ENCODE measurements at regions of chr10 and their contacts with region 1.

Region 1: DNA sequence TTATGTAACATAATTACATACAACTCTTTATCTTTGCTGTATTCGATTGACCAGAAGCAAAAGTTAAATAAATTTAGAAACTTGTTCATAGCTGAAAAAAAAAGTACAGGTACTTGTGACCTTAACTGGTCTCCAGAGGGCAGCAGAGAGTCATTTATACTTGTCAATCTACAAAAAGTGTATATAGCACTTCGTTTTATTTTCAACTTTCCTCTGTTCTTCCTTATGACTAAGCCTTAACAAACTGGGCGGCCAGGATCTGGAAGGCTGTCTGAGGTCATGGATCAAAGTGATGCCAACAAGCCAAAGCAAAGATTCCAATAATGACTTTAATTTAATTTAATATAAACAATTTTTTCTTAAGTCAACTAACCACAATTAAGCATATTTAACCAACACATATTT is 29.8 kb downstream of the C10orf67 start:
- DNase-seq: peak in 7 of 9 donors; percentile 44 to 73 (median 70)
- ATAC-seq: peak; percentile 73
- H3K4me3 ChIP-seq: no peak overlapping the region
- H3K4me3 Mint-ChIP-seq: no peak overlapping the region
- H3K27ac ChIP-seq: no peak overlapping the region
- H3K27ac Mint-ChIP-seq: no peak overlapping the region
- H3K4me1 ChIP-seq: no peaks in the 10 kb centered on the region
- H3K4me1 Mint-ChIP-seq: peaks cover 0 to 5% (median 0%) of the 10 kb centered on the region in 7 donors
- H3K27me3 ChIP-seq: no peaks in the 10 kb centered on the region
- H3K27me3 Mint-ChIP-seq: peaks cover 0 to 6% (median 0%) of the 10 kb centered on the region in 5 donors

Region 2: DNA sequence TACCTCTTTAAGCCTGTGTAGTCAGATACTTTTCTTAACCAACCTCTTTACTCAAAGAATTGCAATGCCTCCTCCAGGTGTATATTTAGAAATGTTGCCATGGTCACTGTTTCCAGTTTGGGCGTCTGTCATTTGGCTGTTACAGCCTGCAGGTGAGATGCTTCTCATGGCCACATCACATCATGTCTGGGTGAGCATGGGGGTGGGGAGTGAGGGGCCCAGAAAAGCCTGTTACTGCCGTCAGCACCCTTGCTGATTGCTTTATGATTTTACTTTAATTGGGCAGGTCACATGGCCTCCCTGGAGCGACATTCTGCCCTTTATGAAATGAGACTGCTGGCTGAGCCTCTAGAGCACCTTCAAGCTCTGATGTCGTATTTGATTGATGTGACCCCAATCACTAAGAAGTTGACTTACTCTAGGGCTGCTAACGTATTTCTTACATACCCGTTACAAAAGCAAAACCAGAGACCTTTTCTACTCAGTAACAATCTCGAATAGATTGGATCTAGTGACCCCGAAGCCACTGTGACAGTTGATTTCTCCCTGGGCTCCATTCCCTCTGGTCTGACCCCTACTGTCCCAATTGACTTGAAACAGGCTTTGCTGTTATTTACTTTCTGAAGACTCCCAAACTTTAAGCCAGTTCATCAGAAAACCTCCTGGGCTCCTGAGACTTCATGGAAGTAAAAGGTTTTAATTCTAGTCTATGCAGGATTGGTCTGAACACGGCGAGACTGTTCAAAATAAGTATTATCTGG is 184.7 kb after region 1 on chr10:
- CTCF ChIA-PET with region 1: no interaction called
- POLR2A ChIA-PET with region 1: no interaction called
- intact Hi-C with region 1: loop called in 1 of 2 experiments (anchors 1 kb)
- DNase-seq: no peak
- ATAC-seq: no peak
- H3K4me3 ChIP-seq: no peak overlapping the region
- H3K4me3 Mint-ChIP-seq: no peak overlapping the region
- H3K27ac ChIP-seq: no peak overlapping the region
- H3K27ac Mint-ChIP-seq: peak overlapping the region in 1 of 9 donors; percentile 4
- H3K4me1 ChIP-seq: no peaks in the 10 kb centered on the region
- H3K4me1 Mint-ChIP-seq: no peaks in the 10 kb centered on the region
- H3K27me3 ChIP-seq: no peaks in the 10 kb centered on the region
- H3K27me3 Mint-ChIP-seq: peaks cover 0 to 9% (median 0%) of the 10 kb centered on the region in 5 donors

Region 3: GRCh38 chr10:23516530-23516929 is 201.7 kb after region 1 on chr10:
- CTCF ChIA-PET with region 1: interaction called, 5 read pairs
- POLR2A ChIA-PET with region 1: no interaction called
- intact Hi-C with region 1: loop called in 1 of 2 experiments (anchors 1 kb)
- DNase-seq: peak in 5 of 9 donors; percentile 17 to 50 (median 40)
- ATAC-seq: no peak
- H3K4me3 ChIP-seq: no peak overlapping the region
- H3K4me3 Mint-ChIP-seq: no peak overlapping the region
- H3K27ac ChIP-seq: no peak overlapping the region
- H3K27ac Mint-ChIP-seq: no peak overlapping the region
- H3K4me1 ChIP-seq: no peaks in the 10 kb centered on the region
- H3K4me1 Mint-ChIP-seq: peaks cover 0 to 17% (median 0%) of the 10 kb centered on the region in 7 donors
- H3K27me3 ChIP-seq: no peaks in the 10 kb centered on the region
- H3K27me3 Mint-ChIP-seq: peaks cover 9 to 23% (median 18%) of the 10 kb centered on the region in 5 donors

Region 4: DNA sequence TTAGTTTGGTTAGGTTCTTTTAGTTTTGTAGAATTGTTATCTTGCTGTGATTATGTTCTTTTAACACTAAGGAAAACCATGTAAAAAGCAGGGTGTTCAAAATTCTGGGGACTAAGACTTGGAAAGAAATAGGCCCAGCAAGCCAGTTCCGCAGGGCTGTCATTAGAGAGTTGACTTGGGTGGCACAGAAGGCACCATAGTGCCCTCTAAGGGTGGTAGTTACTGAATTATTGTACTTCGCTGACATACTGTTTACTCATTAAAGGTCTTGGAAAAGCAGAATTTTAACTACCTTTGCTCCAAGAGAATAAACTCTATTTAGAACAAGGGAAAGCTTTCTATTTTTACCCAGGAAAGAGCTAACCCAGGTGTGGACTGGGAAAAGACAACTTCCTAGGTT is 210.6 kb after region 1 on chr10:
- CTCF ChIA-PET with region 1: interaction called, 18 read pairs
- POLR2A ChIA-PET with region 1: no interaction called
- intact Hi-C with region 1: loop called (anchors 1 kb)
- DNase-seq: peak in 1 of 9 donors; percentile 15
- ATAC-seq: peak; percentile 50
- H3K4me3 ChIP-seq: no peak overlapping the region
- H3K4me3 Mint-ChIP-seq: no peak overlapping the region
- H3K27ac ChIP-seq: no peak overlapping the region
- H3K27ac Mint-ChIP-seq: peak overlapping the region in 1 of 9 donors; percentile 72
- H3K4me1 ChIP-seq: no peaks in the 10 kb centered on the region
- H3K4me1 Mint-ChIP-seq: peaks cover 0 to 5% (median 0%) of the 10 kb centered on the region in 7 donors
- H3K27me3 ChIP-seq: no peaks in the 10 kb centered on the region
- H3K27me3 Mint-ChIP-seq: peaks cover 0 to 7% (median 6%) of the 10 kb centered on the region in 5 donors

Region 5: GRCh38 chr10:23656735-23657134 is 341.9 kb after region 1 on chr10:
- CTCF ChIA-PET with region 1: interaction called, 3 read pairs
- POLR2A ChIA-PET with region 1: no interaction called
- intact Hi-C with region 1: loop called in 1 of 2 experiments (anchors 1 kb)
- DNase-seq: peak in 5 of 9 donors; percentile 4 to 40 (median 37)
- ATAC-seq: no peak
- H3K4me3 ChIP-seq: no peak overlapping the region
- H3K4me3 Mint-ChIP-seq: no peak overlapping the region
- H3K27ac ChIP-seq: no peak overlapping the region
- H3K27ac Mint-ChIP-seq: peak overlapping the region in 1 of 9 donors; percentile 16
- H3K4me1 ChIP-seq: no peaks in the 10 kb centered on the region
- H3K4me1 Mint-ChIP-seq: peaks cover 0 to 2% (median 0%) of the 10 kb centered on the region in 7 donors
- H3K27me3 ChIP-seq: no peaks in the 10 kb centered on the region
- H3K27me3 Mint-ChIP-seq: peaks cover 0 to 14% (median 9%) of the 10 kb centered on the region in 5 donors

Region 6: GRCh38 chr10:23702977-23703414 is 388.2 kb after region 1 on chr10:
- CTCF ChIA-PET with region 1: interaction called, 3 read pairs
- POLR2A ChIA-PET with region 1: no interaction called
- intact Hi-C with region 1: loop called (anchors 1 kb)
- DNase-seq: peak in 7 of 9 donors; percentile 39 to 68 (median 61)
- ATAC-seq: peak; percentile 78
- H3K4me3 ChIP-seq: no peak overlapping the region
- H3K4me3 Mint-ChIP-seq: peak overlapping the region in 8 of 10 donors; percentile 7 to 62 (median 50)
- H3K27ac ChIP-seq: no peak overlapping the region
- H3K27ac Mint-ChIP-seq: peak overlapping the region in 1 of 9 donors; percentile 47
- H3K4me1 ChIP-seq: no peaks in the 10 kb centered on the region
- H3K4me1 Mint-ChIP-seq: peaks cover 3 to 15% (median 12%) of the 10 kb centered on the region in 7 donors
- H3K27me3 ChIP-seq: peaks cover 0 to 4% of the 10 kb centered on the region in 2 donors
- H3K27me3 Mint-ChIP-seq: peaks cover 22 to 40% (median 26%) of the 10 kb centered on the region in 5 donors

Measured in naive thymus-derived CD4-positive, alpha-beta T cell (primary cell).